PC-3 (cell line): ENCODE measurements at regions of chr3 and their contacts with region 1.

Region 1: GRCh38 chr3:101017017-101017416 is 23.8 kb upstream of the ABI3BP start:
- DNase-seq: peak; percentile 67
- ATAC-seq: peak; percentile 99
- H3K4me3 ChIP-seq: no peak overlapping the region
- H3K27ac ChIP-seq: no peak overlapping the region
- H3K4me1 ChIP-seq: peaks cover 13% of the 10 kb centered on the region
- H3K27me3 ChIP-seq: no peaks in the 10 kb centered on the region
- CTCF ChIP-seq: no peak

Region 2: GRCh38 chr3:100999160-100999559 is 17.9 kb before region 1 on chr3:
- CTCF ChIA-PET with region 1: interaction called, 11 read pairs
- POLR2A ChIA-PET with region 1: no interaction called
- intact Hi-C with region 1: no loop called
- DNase-seq: no peak
- ATAC-seq: no peak
- H3K4me3 ChIP-seq: no peak overlapping the region
- H3K27ac ChIP-seq: no peak overlapping the region
- H3K4me1 ChIP-seq: no peaks in the 10 kb centered on the region
- H3K27me3 ChIP-seq: no peaks in the 10 kb centered on the region
- CTCF ChIP-seq: no peak